OCI-LY7 (cell line): ENCODE measurements at regions of chr19 and their contacts with region 1.

Region 1: GRCh38 chr19:732148-733069 is 18.5 kb upstream of the MISP start:
- DNase-seq: no peak
- H3K4me3 ChIP-seq: no peak overlapping the region
- H3K27ac ChIP-seq: no peak overlapping the region
- H3K4me1 ChIP-seq: peaks cover 19% of the 10 kb centered on the region
- CTCF ChIP-seq: no peak

Region 2: GRCh38 chr19:588093-588740 is 144.2 kb before region 1 on chr19:
- CTCF ChIA-PET with region 1: no interaction called
- POLR2A ChIA-PET with region 1: no interaction called
- intact Hi-C with region 1: loop called (anchors 5 kb)
- DNase-seq: peak; percentile 49
- H3K4me3 ChIP-seq: no peak overlapping the region
- H3K27ac ChIP-seq: no peak overlapping the region
- H3K4me1 ChIP-seq: peaks cover 12% of the 10 kb centered on the region
- CTCF ChIP-seq: peak; percentile 63

Region 3: DNA sequence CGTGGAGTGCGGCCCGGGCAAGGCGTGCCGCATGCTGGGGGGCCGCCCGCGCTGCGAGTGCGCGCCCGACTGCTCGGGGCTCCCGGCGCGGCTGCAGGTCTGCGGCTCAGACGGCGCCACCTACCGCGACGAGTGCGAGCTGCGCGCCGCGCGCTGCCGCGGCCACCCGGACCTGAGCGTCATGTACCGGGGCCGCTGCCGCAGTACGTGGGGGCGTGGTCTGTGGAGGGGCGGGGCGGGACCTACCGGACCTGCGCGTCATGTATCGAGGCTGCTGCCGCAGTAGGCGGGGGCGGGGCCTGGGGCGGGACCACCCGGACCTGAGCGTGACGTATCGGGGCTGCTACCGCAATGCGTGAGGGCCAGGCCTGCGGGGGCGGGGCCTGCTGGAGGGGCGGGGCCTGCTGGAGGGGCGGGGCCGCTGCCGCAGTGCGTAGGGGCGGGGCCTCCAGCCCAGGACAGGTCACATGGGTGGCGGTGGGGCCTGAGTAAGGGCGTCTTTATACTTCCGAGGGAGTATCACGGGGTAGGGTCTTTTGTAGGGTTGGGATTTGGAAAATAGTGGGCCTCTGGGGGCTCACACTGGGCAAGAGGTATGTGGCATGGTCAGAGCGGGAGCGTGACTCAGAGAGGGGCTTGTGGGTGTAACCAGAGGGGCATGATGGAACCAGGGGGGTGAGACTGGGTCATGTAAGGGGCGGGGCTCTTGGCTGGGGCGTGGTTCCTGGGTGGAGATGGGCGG is 52.0 kb before region 1 on chr19:
- CTCF ChIA-PET with region 1: no interaction called
- POLR2A ChIA-PET with region 1: interaction called, 3 read pairs
- intact Hi-C with region 1: loop called (anchors 5 kb)
- DNase-seq: peak; percentile 98
- H3K4me3 ChIP-seq: peak overlapping the region; percentile 98
- H3K27ac ChIP-seq: peak overlapping the region; percentile 65
- H3K4me1 ChIP-seq: peaks cover 10% of the 10 kb centered on the region
- CTCF ChIP-seq: peak; percentile 68